ENCODE measurements at regions of chr12 and their contacts with region 1.

Region 1: DNA sequence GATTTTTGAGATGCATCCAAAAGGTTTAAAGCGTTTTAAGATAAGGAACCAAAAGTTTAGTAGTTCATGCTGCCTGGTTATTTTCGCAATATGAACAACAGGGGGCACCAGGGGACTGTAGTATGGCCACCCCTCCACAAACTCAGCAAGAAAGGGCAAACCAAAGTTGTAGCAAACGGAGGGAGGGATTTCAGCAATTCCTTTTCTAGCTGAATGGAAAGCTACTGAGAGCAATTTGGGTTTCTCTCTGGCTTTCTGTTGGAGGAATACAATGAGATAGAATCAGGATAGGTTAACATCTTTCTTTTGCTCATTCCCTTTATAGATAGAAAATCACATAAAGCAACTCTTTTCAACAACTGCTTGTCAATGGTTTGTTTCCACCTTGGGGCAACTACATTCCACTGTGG is 62.5 kb downstream of the DRAM1 start:
- DNase-seq: peak; percentile 69
- H3K4me3 Mint-ChIP-seq: no peak overlapping the region
- H3K27ac Mint-ChIP-seq: no peak overlapping the region
- H3K4me1 Mint-ChIP-seq: peaks cover 16% of the 10 kb centered on the region
- H3K27me3 Mint-ChIP-seq: peaks cover 12% of the 10 kb centered on the region

Region 2: DNA sequence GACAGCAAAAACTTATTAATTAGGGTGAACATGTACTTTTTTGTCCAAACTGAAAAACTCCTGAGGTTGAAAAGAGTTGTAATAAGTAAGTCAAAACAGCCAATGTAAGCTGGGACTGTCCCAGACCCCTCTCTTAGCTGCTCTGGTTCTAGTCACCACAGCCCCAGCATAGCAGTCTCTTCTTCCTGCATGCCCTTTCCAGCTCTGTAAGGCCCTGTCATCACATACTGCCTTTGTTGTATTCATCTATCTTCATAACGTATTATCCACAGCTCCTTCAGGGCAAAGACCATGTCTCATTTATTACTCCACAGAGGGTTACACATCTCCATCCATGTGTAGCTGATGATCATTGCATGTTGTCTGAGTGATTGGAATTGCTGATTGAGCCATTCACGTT is 603.4 kb before region 1 on chr12:
- CTCF ChIA-PET with region 1: no interaction called
- POLR2A ChIA-PET with region 1: no interaction called
- intact Hi-C with region 1: no loop called
- DNase-seq: no peak
- H3K4me3 Mint-ChIP-seq: no peak overlapping the region
- H3K27ac Mint-ChIP-seq: no peak overlapping the region
- H3K4me1 Mint-ChIP-seq: no peaks in the 10 kb centered on the region
- H3K27me3 Mint-ChIP-seq: no peaks in the 10 kb centered on the region

Region 3: GRCh38 chr12:101773650-101774162 is 166.2 kb before region 1 on chr12:
- CTCF ChIA-PET with region 1: interaction called, 6 read pairs
- POLR2A ChIA-PET with region 1: no interaction called
- intact Hi-C with region 1: loop called (anchors 5 kb)
- DNase-seq: peak; percentile 72
- H3K4me3 Mint-ChIP-seq: no peak overlapping the region
- H3K27ac Mint-ChIP-seq: no peak overlapping the region
- H3K4me1 Mint-ChIP-seq: peaks cover 6% of the 10 kb centered on the region
- H3K27me3 Mint-ChIP-seq: no peaks in the 10 kb centered on the region

Region 4: GRCh38 chr12:101928556-101928955 is 11.3 kb before region 1 on chr12:
- CTCF ChIA-PET with region 1: no interaction called
- POLR2A ChIA-PET with region 1: no interaction called
- intact Hi-C with region 1: loop called (anchors 1 kb)
- DNase-seq: no peak
- H3K4me3 Mint-ChIP-seq: no peak overlapping the region
- H3K27ac Mint-ChIP-seq: no peak overlapping the region
- H3K4me1 Mint-ChIP-seq: peaks cover 2% of the 10 kb centered on the region
- H3K27me3 Mint-ChIP-seq: peaks cover 7% of the 10 kb centered on the region

Region 5: GRCh38 chr12:102061560-102062418 is 121.9 kb after region 1 on chr12 and contains the start of gene WASHC3:
- CTCF ChIA-PET with region 1: interaction called, 4 read pairs
- POLR2A ChIA-PET with region 1: interaction called, 3 read pairs
- intact Hi-C with region 1: loop called (anchors 1 kb)
- DNase-seq: peak; percentile 97
- H3K4me3 Mint-ChIP-seq: peak within 1 kb of the TSS; percentile 85
- H3K27ac Mint-ChIP-seq: peak within 1 kb of the TSS; percentile 92
- H3K4me1 Mint-ChIP-seq: peaks cover 32% of the 10 kb centered on the region
- H3K27me3 Mint-ChIP-seq: no peaks in the 10 kb centered on the region
- total RNA-seq, gene WASHC3: 39.3 to 40.1 TPM

Region 6: DNA sequence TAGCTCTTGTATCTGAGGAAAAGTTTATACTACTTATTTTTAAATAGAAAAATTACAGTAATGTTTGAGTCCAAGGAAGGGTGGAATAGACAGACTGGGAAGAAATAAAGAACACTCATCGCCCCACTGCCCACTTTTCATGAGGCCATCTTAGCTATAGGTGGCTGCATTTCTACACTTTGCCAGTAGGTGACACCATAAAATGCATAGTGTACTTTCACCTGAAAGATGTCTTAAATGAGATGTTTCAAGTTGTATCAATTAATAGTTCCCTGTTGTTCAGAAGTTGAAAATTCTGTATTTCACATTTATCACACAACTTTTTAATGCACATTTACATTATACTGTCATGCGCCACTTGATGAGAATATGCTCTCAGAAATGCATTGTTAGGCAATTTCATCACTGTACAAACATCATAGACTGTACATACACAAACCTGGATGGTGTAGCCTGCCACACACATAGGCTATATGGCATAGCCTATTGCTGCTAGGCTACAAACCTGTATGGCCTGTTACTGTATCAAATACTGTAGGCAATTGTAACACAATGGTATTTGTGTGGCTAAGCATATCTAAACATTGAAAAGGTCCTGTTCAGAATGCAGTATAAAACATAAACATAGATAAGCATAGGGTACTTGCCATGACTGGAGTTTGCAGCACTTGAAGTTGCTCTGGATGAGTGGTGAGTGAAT is 230.2 kb after region 1 on chr12:
- CTCF ChIA-PET with region 1: no interaction called
- POLR2A ChIA-PET with region 1: no interaction called
- intact Hi-C with region 1: loop called (anchors 1 kb)
- DNase-seq: no peak
- H3K4me3 Mint-ChIP-seq: no peak overlapping the region
- H3K27ac Mint-ChIP-seq: no peak overlapping the region
- H3K4me1 Mint-ChIP-seq: peaks cover 15% of the 10 kb centered on the region
- H3K27me3 Mint-ChIP-seq: no peaks in the 10 kb centered on the region

Region 7: GRCh38 chr12:102484428-102484958 is 544.6 kb after region 1 on chr12:
- CTCF ChIA-PET with region 1: interaction called, 7 read pairs
- POLR2A ChIA-PET with region 1: interaction called, 3 read pairs
- intact Hi-C with region 1: loop called (anchors 1 kb)
- DNase-seq: peak; percentile 71
- H3K4me3 Mint-ChIP-seq: no peak overlapping the region
- H3K27ac Mint-ChIP-seq: peak overlapping the region; percentile 76
- H3K4me1 Mint-ChIP-seq: peaks cover 17% of the 10 kb centered on the region
- H3K27me3 Mint-ChIP-seq: peaks cover 3% of the 10 kb centered on the region

Region 8: GRCh38 chr12:102769319-102769916 is 829.6 kb after region 1 on chr12:
- CTCF ChIA-PET with region 1: interaction called, 5 read pairs
- POLR2A ChIA-PET with region 1: no interaction called
- intact Hi-C with region 1: loop called (anchors 1 kb)
- DNase-seq: peak; percentile 47
- H3K4me3 Mint-ChIP-seq: no peak overlapping the region
- H3K27ac Mint-ChIP-seq: no peak overlapping the region
- H3K4me1 Mint-ChIP-seq: no peaks in the 10 kb centered on the region
- H3K27me3 Mint-ChIP-seq: peaks cover 1% of the 10 kb centered on the region

Measured in activated CD4-positive, alpha-beta memory T cell treated with anti-CD3 and anti-CD28 coated beads for 36 hours (primary cell).